Activated B cell treated with CpG ODN at 0.5 μM for 24 hours (primary cell): ENCODE measurements at regions of chr9 and their contacts with region 1.

Region 1: DNA sequence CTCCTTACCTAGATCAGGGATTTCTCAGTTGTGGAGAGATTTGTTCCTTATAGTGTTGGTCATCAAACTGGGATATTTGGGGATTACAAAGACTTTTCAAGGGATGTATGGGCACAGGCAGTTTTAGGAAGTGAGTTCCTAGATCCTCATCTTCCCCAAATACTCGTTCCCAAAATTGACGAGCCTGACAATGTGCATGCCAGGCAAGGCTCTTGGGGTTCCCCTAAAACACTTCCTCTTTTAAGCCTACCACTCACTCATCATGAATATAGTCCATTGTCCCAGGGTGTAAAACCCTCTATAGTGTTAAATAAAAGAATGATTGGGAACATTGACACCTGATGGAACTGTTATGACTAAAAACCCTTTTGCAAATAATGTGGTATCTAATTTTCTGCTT is 26.4 kb downstream of the PDCD1LG2 start:
- DNase-seq: no peak
- ATAC-seq: peak; percentile 80
- H3K4me3 Mint-ChIP-seq: peak overlapping the region; percentile 32
- H3K27ac Mint-ChIP-seq: peak overlapping the region; percentile 63
- H3K4me1 Mint-ChIP-seq: peaks cover 55% of the 10 kb centered on the region
- H3K27me3 Mint-ChIP-seq: no peaks in the 10 kb centered on the region
- CTCF ChIP-seq: no peak

Region 2: GRCh38 chr9:5549658-5550310 is 13.1 kb after region 1 on chr9:
- CTCF ChIA-PET with region 1: no interaction called
- POLR2A ChIA-PET with region 1: interaction called, 3 read pairs
- intact Hi-C with region 1: loop called (anchors 1 kb)
- DNase-seq: no peak
- ATAC-seq: no peak
- H3K4me3 Mint-ChIP-seq: no peak overlapping the region
- H3K27ac Mint-ChIP-seq: no peak overlapping the region
- H3K4me1 Mint-ChIP-seq: peaks cover 10% of the 10 kb centered on the region
- H3K27me3 Mint-ChIP-seq: no peaks in the 10 kb centered on the region
- CTCF ChIP-seq: no peak

Region 3: GRCh38 chr9:5557606-5558587 is 21.2 kb after region 1 on chr9:
- CTCF ChIA-PET with region 1: no interaction called
- POLR2A ChIA-PET with region 1: interaction called, 16 read pairs
- intact Hi-C with region 1: loop called (anchors 2 kb)
- DNase-seq: peak; percentile 20
- ATAC-seq: peak; percentile 83
- H3K4me3 Mint-ChIP-seq: peak overlapping the region; percentile 50
- H3K27ac Mint-ChIP-seq: peak overlapping the region; percentile 75
- H3K4me1 Mint-ChIP-seq: peaks cover 55% of the 10 kb centered on the region
- H3K27me3 Mint-ChIP-seq: no peaks in the 10 kb centered on the region
- CTCF ChIP-seq: no peak

Region 4: DNA sequence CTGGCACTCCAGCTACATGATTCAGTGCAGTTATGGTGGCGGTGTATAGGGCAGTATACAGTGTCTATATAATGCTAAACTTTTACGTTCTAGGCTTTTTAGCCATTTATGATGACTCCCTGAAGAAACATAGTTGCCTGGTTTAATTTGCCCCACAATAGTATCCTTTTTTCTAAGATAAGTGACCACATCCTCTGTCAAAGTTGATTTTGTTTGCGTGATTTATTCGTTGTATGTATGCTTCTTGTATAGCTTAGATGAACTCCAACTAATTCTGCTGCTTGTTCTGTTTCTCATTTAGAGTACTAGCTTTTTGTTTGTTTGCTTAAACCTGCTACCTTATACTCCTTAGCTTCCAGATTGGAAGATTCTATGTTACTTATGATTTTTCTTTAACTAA is 212.6 kb after region 1 on chr9:
- CTCF ChIA-PET with region 1: no interaction called
- POLR2A ChIA-PET with region 1: no interaction called
- intact Hi-C with region 1: no loop called
- DNase-seq: no peak
- ATAC-seq: no peak
- H3K4me3 Mint-ChIP-seq: no peak overlapping the region
- H3K27ac Mint-ChIP-seq: no peak overlapping the region
- H3K4me1 Mint-ChIP-seq: no peaks in the 10 kb centered on the region
- H3K27me3 Mint-ChIP-seq: no peaks in the 10 kb centered on the region
- CTCF ChIP-seq: no peak